Activated naive CD4-positive, alpha-beta T cell treated with anti-CD3 and anti-CD28 coated beads for 36 hours (primary cell): ENCODE measurements at regions of chr7 and their contacts with region 1.

Region 1: GRCh38 chr7:148535217-148535616 is 55.3 kb upstream of the C7orf33 start:
- DNase-seq: peak; percentile 79
- H3K4me3 Mint-ChIP-seq: peak overlapping the region; percentile 69
- H3K27ac Mint-ChIP-seq: peak overlapping the region; percentile 76
- H3K4me1 Mint-ChIP-seq: peaks cover 10% of the 10 kb centered on the region
- H3K27me3 Mint-ChIP-seq: peaks cover 10% of the 10 kb centered on the region

Region 2: GRCh38 chr7:148563583-148564274 is 28.5 kb after region 1 on chr7:
- CTCF ChIA-PET with region 1: interaction called, 3 read pairs
- intact Hi-C with region 1: loop called (anchors 1 kb)
- DNase-seq: peak; percentile 53
- H3K4me3 Mint-ChIP-seq: peak overlapping the region; percentile 20
- H3K27ac Mint-ChIP-seq: peak overlapping the region; percentile 89
- H3K4me1 Mint-ChIP-seq: peaks cover 27% of the 10 kb centered on the region
- H3K27me3 Mint-ChIP-seq: peaks cover 2% of the 10 kb centered on the region

Region 3: GRCh38 chr7:148575640-148576411 is 40.6 kb after region 1 on chr7:
- CTCF ChIA-PET with region 1: interaction called, 11 read pairs
- intact Hi-C with region 1: loop called (anchors 1 kb)
- DNase-seq: peak; percentile 84
- H3K4me3 Mint-ChIP-seq: no peak overlapping the region
- H3K27ac Mint-ChIP-seq: no peak overlapping the region
- H3K4me1 Mint-ChIP-seq: peaks cover 11% of the 10 kb centered on the region
- H3K27me3 Mint-ChIP-seq: no peaks in the 10 kb centered on the region

Region 4: GRCh38 chr7:148712678-148713329 is 177.6 kb after region 1 on chr7:
- CTCF ChIA-PET with region 1: no interaction called
- intact Hi-C with region 1: no loop called
- DNase-seq: no peak
- H3K4me3 Mint-ChIP-seq: no peak overlapping the region
- H3K27ac Mint-ChIP-seq: no peak overlapping the region
- H3K4me1 Mint-ChIP-seq: peaks cover 81% of the 10 kb centered on the region
- H3K27me3 Mint-ChIP-seq: no peaks in the 10 kb centered on the region

Region 5: DNA sequence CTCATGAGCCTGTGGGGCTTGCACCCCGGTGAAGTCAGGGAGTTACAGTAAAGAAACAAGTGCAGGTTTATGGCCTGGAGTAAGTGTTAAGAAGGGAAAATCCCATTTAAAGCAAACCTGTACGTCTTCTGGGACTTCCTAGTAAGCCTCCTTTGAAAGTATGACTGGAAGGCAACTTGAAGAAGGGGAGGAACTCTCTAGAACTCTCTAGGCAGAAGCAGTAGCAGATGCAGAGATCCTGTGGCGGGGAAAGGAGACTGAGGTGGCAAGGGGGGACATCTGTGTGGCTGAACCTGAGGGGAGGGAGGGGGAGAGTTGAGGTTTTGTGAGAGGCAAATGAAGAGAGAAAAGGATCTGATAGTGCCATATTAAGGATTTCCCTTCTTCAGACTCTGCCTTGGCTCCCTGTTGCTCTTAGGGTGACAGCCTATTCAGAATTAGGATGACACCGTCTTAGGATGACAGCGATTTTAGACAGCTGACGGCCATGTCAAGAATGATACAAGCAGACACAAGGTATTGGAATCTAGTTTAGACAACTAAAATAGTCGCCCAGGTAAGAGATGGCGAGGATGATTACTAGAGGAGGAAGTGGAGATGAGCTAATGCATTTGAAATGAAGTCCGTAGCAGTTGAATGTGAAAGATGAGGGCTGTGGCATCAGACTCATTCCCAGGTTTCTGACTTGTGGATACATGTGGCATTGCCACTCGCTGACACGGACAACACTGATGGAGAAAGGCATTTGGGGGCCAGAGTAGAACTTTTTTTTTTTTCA is 192.5 kb after region 1 on chr7:
- CTCF ChIA-PET with region 1: no interaction called
- intact Hi-C with region 1: loop called (anchors 1 kb)
- DNase-seq: peak; percentile 83
- H3K4me3 Mint-ChIP-seq: no peak overlapping the region
- H3K27ac Mint-ChIP-seq: peak overlapping the region; percentile 64
- H3K4me1 Mint-ChIP-seq: peaks cover 66% of the 10 kb centered on the region
- H3K27me3 Mint-ChIP-seq: no peaks in the 10 kb centered on the region

Region 6: GRCh38 chr7:148927123-148928045 is 392.2 kb after region 1 on chr7:
- CTCF ChIA-PET with region 1: no interaction called
- intact Hi-C with region 1: loop called (anchors 1 kb)
- DNase-seq: no peak
- H3K4me3 Mint-ChIP-seq: peak overlapping the region; percentile 34
- H3K27ac Mint-ChIP-seq: peak overlapping the region; percentile 92
- H3K4me1 Mint-ChIP-seq: peaks cover 67% of the 10 kb centered on the region
- H3K27me3 Mint-ChIP-seq: no peaks in the 10 kb centered on the region